ENCODE measurements at regions of chr11 and their contacts with region 1.

Region 1: GRCh38 chr11:121417055-121417551 is 35.0 kb upstream of the SORL1 start:
- DNase-seq: peak; percentile 27
- H3K4me3 Mint-ChIP-seq: peak overlapping the region; percentile 12
- H3K27ac Mint-ChIP-seq: peak overlapping the region; percentile 40
- H3K4me1 Mint-ChIP-seq: peaks cover 65% of the 10 kb centered on the region
- H3K27me3 Mint-ChIP-seq: no peaks in the 10 kb centered on the region

Region 2: DNA sequence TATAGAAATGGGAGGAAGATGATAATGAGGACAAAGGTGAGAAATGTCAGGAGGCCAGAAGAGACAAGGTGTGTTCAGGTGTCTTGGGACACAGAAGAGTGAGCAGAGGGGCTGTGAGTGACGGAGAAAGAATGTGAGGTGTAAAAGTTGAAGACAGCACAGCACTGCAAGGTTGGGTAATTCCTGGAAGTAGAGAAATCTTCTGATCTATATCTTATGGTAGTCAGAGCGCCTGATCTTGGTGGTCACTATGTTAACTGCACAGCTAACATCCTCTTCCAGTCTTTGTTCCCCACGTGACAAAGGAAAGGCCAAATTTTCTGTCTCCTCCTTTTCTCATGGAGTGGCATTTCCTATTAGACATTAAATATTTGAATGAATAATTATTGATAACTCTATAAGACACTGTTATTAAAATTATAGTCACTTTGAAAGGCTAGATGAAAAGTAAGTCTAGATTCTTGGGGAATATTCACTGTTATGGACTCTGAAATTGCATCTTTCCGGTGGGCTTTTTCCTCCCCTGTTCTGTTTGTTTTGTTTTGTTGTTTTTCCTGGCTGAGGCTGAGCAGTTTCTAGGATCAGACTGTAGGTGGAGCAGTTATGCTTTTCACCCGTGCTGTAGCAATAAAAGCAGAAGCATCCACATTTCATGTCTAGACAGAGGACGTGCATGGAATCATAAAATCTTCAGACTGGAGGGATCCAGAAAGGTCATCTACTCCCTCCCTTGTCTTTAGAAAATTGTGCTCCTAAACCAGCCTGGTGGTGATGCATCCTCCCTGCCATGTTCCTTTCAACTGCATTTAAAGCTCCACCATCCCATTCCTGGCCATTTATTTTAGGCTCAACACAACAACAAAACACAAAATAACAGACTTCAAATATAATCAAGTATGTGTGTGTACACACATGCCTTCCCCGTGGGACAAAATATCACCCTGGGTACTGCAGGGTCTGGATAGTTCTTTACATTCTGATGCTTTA is 98.0 kb before region 1 on chr11:
- intact Hi-C with region 1: loop called (anchors 2 kb)
- DNase-seq: no peak
- H3K4me3 Mint-ChIP-seq: no peak overlapping the region
- H3K27ac Mint-ChIP-seq: no peak overlapping the region
- H3K4me1 Mint-ChIP-seq: peaks cover 24% of the 10 kb centered on the region
- H3K27me3 Mint-ChIP-seq: peaks cover 5% of the 10 kb centered on the region

Region 3: GRCh38 chr11:121341609-121342008 is 75.5 kb before region 1 on chr11:
- intact Hi-C with region 1: no loop called
- DNase-seq: no peak
- H3K4me3 Mint-ChIP-seq: no peak overlapping the region
- H3K27ac Mint-ChIP-seq: no peak overlapping the region
- H3K4me1 Mint-ChIP-seq: peaks cover 52% of the 10 kb centered on the region
- H3K27me3 Mint-ChIP-seq: peaks cover 6% of the 10 kb centered on the region

Region 4: GRCh38 chr11:121367001-121367843 is 49.9 kb before region 1 on chr11:
- intact Hi-C with region 1: loop called (anchors 5 kb)
- DNase-seq: peak; percentile 17
- H3K4me3 Mint-ChIP-seq: peak overlapping the region; percentile 60
- H3K27ac Mint-ChIP-seq: peak overlapping the region; percentile 77
- H3K4me1 Mint-ChIP-seq: peaks cover 50% of the 10 kb centered on the region
- H3K27me3 Mint-ChIP-seq: no peaks in the 10 kb centered on the region

Region 5: DNA sequence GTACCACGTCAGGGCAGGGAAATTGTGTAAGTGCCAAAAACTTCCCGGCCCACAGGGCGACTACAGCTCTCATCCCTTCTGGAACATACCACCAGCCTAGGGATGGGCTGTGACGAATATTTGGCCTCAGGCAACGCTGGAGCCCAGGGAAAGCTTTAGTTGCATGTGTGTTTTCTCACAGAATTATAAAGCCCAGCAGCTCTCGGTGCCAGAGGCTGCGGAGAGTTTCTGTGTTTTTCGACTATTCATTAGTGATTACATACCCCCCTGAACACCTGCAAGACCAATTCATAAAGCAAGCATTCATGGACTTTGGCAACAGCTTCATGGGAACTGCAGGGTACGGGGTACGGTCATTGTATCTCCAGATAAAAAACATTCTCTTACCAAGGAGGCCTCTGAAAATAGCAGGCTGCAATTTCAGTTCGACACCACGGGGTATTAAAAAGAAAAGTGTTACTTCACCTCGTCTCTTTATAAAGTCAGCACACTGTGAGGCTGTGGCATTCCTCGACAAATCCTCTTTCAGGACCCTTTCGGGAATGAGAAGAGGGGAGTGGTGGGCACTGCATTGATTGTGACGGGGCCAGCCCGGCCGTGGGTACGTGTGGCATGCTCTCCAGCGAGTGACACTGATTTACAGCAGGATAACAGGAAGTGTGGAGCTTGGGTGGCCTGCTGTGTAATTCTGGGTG is 279.2 kb after region 1 on chr11:
- intact Hi-C with region 1: no loop called
- DNase-seq: no peak
- H3K4me3 Mint-ChIP-seq: no peak overlapping the region
- H3K27ac Mint-ChIP-seq: no peak overlapping the region
- H3K4me1 Mint-ChIP-seq: no peaks in the 10 kb centered on the region
- H3K27me3 Mint-ChIP-seq: peaks cover 8% of the 10 kb centered on the region